ENCODE measurements at regions of chr2 and their contacts with region 1.

Region 1: DNA sequence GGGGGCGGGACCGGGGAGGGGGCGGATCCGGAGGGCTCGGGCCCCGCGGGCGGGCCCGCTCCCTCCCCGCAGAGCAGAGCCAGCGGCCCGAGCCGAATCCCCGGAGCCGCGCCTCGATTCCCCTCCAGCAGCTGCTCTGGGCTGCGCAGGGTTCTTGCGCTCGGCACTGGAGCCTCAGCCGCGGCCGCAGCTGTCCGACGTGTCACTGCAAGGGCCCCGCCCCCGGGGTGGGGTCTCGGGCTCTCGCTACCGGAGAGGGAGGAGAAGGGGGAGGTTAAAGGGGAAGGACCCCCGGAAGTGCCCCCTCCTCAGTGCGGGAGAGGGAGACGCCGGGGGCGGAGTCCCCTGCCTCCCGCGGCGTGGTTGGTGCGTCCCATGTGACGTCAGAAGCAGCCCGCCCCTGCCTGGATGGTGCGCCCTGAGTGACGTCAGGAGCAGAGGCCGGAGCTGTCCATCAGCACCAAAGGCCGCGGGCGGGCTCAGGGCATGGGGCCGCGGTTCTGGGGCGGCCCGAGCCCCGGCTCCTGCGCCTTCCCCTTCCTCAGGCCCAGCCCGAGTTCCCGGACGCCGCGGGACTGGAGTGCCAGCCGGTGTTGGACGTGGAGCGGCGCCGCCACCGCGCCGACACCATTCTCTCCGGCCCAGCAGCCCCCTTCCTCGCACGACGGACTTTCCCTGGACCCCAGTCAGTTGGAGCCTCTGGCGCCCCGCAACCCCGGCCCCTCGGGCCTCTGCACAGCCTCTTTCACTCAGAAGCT is at the starts of genes CHPF and TMEM198:
- DNase-seq: peak; percentile 97
- H3K4me3 ChIP-seq: peak within 1 kb of the TSS; percentile 64
- H3K27ac ChIP-seq: peak within 1 kb of the TSS; percentile 73
- H3K4me1 ChIP-seq: peaks cover 11% of the 10 kb centered on the region
- H3K27me3 ChIP-seq: no peaks in the 10 kb centered on the region
- CTCF ChIP-seq: no peak
- total RNA-seq, gene CHPF: 13.8 and 15.8 TPM in 2 replicates
- total RNA-seq, gene TMEM198: 4.6 and 7.6 TPM in 2 replicates

Region 2: GRCh38 chr2:219160186-219161017 is 383.4 kb before region 1 on chr2 and contains the start of gene NHEJ1:
- CTCF ChIA-PET with region 1: no interaction called
- POLR2A ChIA-PET with region 1: no interaction called
- intact Hi-C with region 1: no loop called
- DNase-seq: peak; percentile 92
- H3K4me3 ChIP-seq: peak within 1 kb of the TSS; percentile 68
- H3K27ac ChIP-seq: peak within 1 kb of the TSS; percentile 89
- H3K4me1 ChIP-seq: peaks cover 4% of the 10 kb centered on the region
- H3K27me3 ChIP-seq: no peaks in the 10 kb centered on the region
- CTCF ChIP-seq: peak; percentile 98
- total RNA-seq, gene NHEJ1: 16.6 and 18.0 TPM in 2 replicates

Region 3: DNA sequence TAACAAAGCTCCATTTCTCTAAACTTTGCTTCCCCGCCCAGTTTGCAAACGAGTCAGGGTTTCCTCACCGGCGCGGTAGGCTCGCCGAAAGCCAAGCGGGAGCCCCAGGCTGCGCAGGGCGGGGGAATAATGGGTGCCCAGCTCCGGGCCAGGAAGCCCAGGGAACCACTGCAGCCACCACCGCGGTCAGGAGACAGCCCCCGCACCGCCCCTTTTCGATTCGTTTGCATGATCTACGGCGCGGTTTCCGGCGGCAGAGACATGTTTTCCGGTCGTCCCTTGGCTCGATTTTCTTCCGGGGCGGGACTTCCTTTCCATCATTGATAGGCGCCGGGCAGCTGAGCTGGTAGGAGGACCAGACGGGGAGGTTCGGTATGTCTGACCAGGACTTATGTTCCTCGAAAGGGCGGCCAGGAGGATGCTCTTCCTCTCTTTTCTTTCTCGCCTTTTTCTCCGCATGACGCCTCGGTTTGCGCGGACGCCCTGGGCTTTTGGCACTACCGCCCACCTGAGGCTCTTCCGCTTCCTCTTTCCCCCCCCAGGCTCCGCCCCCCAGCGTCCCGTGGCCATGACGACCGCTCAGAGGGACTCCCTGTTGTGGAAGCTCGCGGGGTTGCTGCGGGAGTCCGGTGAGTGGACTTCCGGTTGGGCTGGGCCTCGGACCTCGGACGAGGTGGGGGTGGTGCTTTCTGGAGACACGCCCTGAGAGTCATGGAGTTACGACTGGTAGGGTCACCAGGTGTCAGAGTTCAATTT is 54.0 kb after region 1 on chr2 and contains the start of gene STK11IP:
- CTCF ChIA-PET with region 1: no interaction called
- POLR2A ChIA-PET with region 1: no interaction called
- intact Hi-C with region 1: loop called (anchors 1 kb)
- DNase-seq: peak; percentile 98
- H3K4me3 ChIP-seq: peak within 1 kb of the TSS; percentile 72
- H3K27ac ChIP-seq: peak within 1 kb of the TSS; percentile 92
- H3K4me1 ChIP-seq: peaks cover 23% of the 10 kb centered on the region
- H3K27me3 ChIP-seq: no peaks in the 10 kb centered on the region
- CTCF ChIP-seq: no peak
- total RNA-seq, gene STK11IP: 35.6 and 43.9 TPM in 2 replicates

Region 4: GRCh38 chr2:219689676-219690628 is 146.2 kb after region 1 on chr2:
- CTCF ChIA-PET with region 1: interaction called, 3 read pairs
- POLR2A ChIA-PET with region 1: no interaction called
- intact Hi-C with region 1: loop called (anchors 2 kb)
- DNase-seq: peak; percentile 72
- H3K4me3 ChIP-seq: no peak overlapping the region
- H3K27ac ChIP-seq: no peak overlapping the region
- H3K4me1 ChIP-seq: peaks cover 6% of the 10 kb centered on the region
- H3K27me3 ChIP-seq: no peaks in the 10 kb centered on the region
- CTCF ChIP-seq: peak; percentile 75

Region 5: GRCh38 chr2:219752731-219753130 is 209.0 kb after region 1 on chr2:
- CTCF ChIA-PET with region 1: no interaction called
- POLR2A ChIA-PET with region 1: no interaction called
- intact Hi-C with region 1: no loop called
- DNase-seq: no peak
- H3K4me3 ChIP-seq: no peak overlapping the region
- H3K27ac ChIP-seq: no peak overlapping the region
- H3K4me1 ChIP-seq: peaks cover 18% of the 10 kb centered on the region
- H3K27me3 ChIP-seq: no peaks in the 10 kb centered on the region
- CTCF ChIP-seq: no peak